Transverse colon (tissue), 4 donors: ENCODE measurements at regions of chr16 and their contacts with region 1.

Region 1: DNA sequence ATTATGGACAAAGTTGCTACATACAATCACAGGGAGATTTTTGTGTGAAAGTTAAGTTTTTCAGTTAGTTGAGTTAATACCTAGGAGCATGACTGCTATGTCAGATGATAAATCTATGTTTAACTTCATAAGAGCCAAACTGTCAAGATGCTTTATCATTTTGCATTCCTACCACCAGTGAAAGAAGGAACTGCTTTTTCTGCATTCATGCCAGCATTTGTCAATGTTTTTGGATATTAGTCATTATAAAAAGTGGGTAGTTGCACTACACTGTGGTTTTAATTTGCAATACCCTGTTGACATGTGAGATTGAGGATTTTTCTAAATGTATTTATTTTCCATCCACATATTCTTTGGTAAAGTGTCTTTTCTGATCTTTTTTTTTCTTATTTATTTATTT is 434.0 kb upstream of the MON1B start:
- DNase-seq: no peak
- H3K4me3 ChIP-seq: no peak overlapping the region
- H3K27ac ChIP-seq: no peak overlapping the region
- H3K4me1 ChIP-seq: no peaks in the 10 kb centered on the region
- H3K27me3 ChIP-seq: no peaks in the 10 kb centered on the region
- CTCF ChIP-seq: no peak
- EP300 ChIP-seq: no peak
- POLR2A ChIP-seq: no peak

Region 2: DNA sequence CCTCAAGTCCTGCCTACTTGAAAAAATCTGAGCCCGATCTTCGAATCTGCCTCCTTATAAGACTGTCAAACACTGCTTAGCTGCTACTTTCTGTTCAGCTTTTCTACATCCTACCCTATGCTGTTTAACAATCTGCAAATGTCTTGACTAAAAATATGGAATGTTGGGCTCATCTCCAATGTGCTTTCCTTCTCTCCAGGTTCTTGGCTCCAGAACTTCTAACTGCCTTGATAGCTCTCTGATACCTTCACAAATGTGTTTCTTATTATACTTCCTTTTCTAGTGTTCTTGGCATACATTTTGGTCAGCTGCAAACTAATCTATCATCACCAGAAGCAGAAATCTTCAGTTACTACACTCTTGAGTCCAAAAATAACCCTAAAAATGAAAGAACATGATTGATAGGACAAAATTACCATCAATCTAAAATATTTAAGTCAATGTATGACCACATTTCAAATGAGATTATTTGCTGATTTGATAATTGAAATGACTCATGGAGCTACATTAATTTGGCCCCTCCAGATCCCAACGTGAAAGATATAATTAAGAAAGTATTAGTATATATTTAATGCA is 61.7 kb after region 1 on chr16:
- in situ Hi-C with region 1: no loop called
- intact Hi-C with region 1: loop called (anchors 2 kb)
- DNase-seq: no peak
- H3K4me3 ChIP-seq: no peak overlapping the region
- H3K27ac ChIP-seq: no peak overlapping the region
- H3K4me1 ChIP-seq: no peaks in the 10 kb centered on the region
- H3K27me3 ChIP-seq: no peaks in the 10 kb centered on the region
- CTCF ChIP-seq: no peak
- EP300 ChIP-seq: no peak
- POLR2A ChIP-seq: no peak